CD8-positive, alpha-beta memory T cell (primary cell): ENCODE measurements at regions of chr2 and their contacts with region 1.

Region 1: GRCh38 chr2:105828558-105828957 is 83.8 kb downstream of the NCK2 start:
- DNase-seq: no peak
- H3K4me3 ChIP-seq: no peak overlapping the region
- H3K4me3 Mint-ChIP-seq: peak overlapping the region in 4 of 7 donors; percentile 3 to 41 (median 16)
- H3K27ac ChIP-seq: no peak overlapping the region
- H3K27ac Mint-ChIP-seq: peak overlapping the region; percentile 51 to 96 (median 81)
- H3K4me1 ChIP-seq: peaks cover 41% of the 10 kb centered on the region
- H3K4me1 Mint-ChIP-seq: peaks cover 86 to 98% (median 92%) of the 10 kb centered on the region in 3 donors
- H3K27me3 ChIP-seq: no peaks in the 10 kb centered on the region
- H3K27me3 Mint-ChIP-seq: no peaks in the 10 kb centered on the region

Region 2: GRCh38 chr2:105431367-105432043 is 397.1 kb before region 1 on chr2:
- CTCF ChIA-PET with region 1: no interaction called
- POLR2A ChIA-PET with region 1: no interaction called
- DNase-seq: no peak
- H3K4me3 ChIP-seq: no peak overlapping the region
- H3K4me3 Mint-ChIP-seq: no peak overlapping the region
- H3K27ac ChIP-seq: no peak overlapping the region
- H3K27ac Mint-ChIP-seq: no peak overlapping the region
- H3K4me1 ChIP-seq: peaks cover 14% of the 10 kb centered on the region
- H3K4me1 Mint-ChIP-seq: peaks cover 12 to 16% (median 13%) of the 10 kb centered on the region in 3 donors
- H3K27me3 ChIP-seq: no peaks in the 10 kb centered on the region
- H3K27me3 Mint-ChIP-seq: peaks cover 7 to 15% of the 10 kb centered on the region in 2 donors

Region 3: GRCh38 chr2:105858868-105859693 is 30.5 kb after region 1 on chr2:
- CTCF ChIA-PET with region 1: interaction called, 10 read pairs
- POLR2A ChIA-PET with region 1: interaction called, 4 read pairs
- DNase-seq: no peak
- H3K4me3 ChIP-seq: peak overlapping the region; percentile 26
- H3K4me3 Mint-ChIP-seq: peak overlapping the region; percentile 12 to 85 (median 63)
- H3K27ac ChIP-seq: peak overlapping the region; percentile 21
- H3K27ac Mint-ChIP-seq: peak overlapping the region; percentile 85 to 98 (median 94)
- H3K4me1 ChIP-seq: peaks cover 86% of the 10 kb centered on the region
- H3K4me1 Mint-ChIP-seq: peaks cover 95 to 97% (median 96%) of the 10 kb centered on the region in 3 donors
- H3K27me3 ChIP-seq: no peaks in the 10 kb centered on the region
- H3K27me3 Mint-ChIP-seq: no peaks in the 10 kb centered on the region

Region 4: GRCh38 chr2:105990624-105991023 is 162.1 kb after region 1 on chr2:
- CTCF ChIA-PET with region 1: no interaction called
- POLR2A ChIA-PET with region 1: no interaction called
- DNase-seq: no peak
- H3K4me3 ChIP-seq: no peak overlapping the region
- H3K4me3 Mint-ChIP-seq: no peak overlapping the region
- H3K27ac ChIP-seq: no peak overlapping the region
- H3K27ac Mint-ChIP-seq: no peak overlapping the region
- H3K4me1 ChIP-seq: peaks cover 28% of the 10 kb centered on the region
- H3K4me1 Mint-ChIP-seq: peaks cover 17 to 37% (median 31%) of the 10 kb centered on the region in 3 donors
- H3K27me3 ChIP-seq: no peaks in the 10 kb centered on the region
- H3K27me3 Mint-ChIP-seq: no peaks in the 10 kb centered on the region